Ascending aorta (tissue), 2 donors: ENCODE measurements at regions of chr3 and their contacts with region 1.

Region 1: GRCh38 chr3:174440741-174441587 is 418.2 kb upstream of the NAALADL2 start:
- DNase-seq: peak; percentile 15 to 91
- H3K4me3 ChIP-seq: peak overlapping the region; percentile 81 to 93
- H3K27ac ChIP-seq: peak overlapping the region; percentile 90 to 99
- H3K4me1 ChIP-seq: peaks cover 0 to 5% of the 10 kb centered on the region in 2 donors
- H3K27me3 ChIP-seq: no peaks in the 10 kb centered on the region
- CTCF ChIP-seq: no peak

Region 2: GRCh38 chr3:173395412-173396181 is 1045.4 kb before region 1 on chr3:
- intact Hi-C with region 1: loop called (anchors 2 kb)
- DNase-seq: peak; percentile 53 to 95
- H3K4me3 ChIP-seq: peak overlapping the region; percentile 55 to 87
- H3K27ac ChIP-seq: peak overlapping the region; percentile 85 to 91
- H3K4me1 ChIP-seq: peaks cover 0 to 2% of the 10 kb centered on the region in 2 donors
- H3K27me3 ChIP-seq: no peaks in the 10 kb centered on the region
- CTCF ChIP-seq: peak in 1 of 3 experiments; percentile 13

Region 3: DNA sequence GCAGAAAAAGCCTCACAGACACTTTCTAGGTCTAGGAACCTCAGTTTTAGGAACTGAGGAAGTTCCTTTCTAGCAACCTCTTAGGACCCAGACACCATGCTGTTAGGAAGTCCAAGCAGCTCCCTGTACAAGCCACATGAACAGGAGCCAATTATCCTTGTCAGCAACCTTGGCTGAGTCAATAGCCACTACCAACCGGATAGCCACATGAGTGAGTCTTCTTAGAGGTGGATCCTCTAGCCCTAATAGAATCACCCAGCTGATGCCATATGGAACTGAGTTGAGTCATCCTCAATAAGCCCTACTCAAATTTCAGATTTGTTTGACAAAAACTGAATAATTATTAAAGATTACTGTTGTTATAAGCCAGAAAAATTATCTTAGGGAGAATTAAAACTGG is 787.2 kb before region 1 on chr3:
- intact Hi-C with region 1: no loop called
- DNase-seq: no peak
- H3K4me3 ChIP-seq: no peak overlapping the region
- H3K27ac ChIP-seq: no peak overlapping the region
- H3K4me1 ChIP-seq: no peaks in the 10 kb centered on the region
- H3K27me3 ChIP-seq: no peaks in the 10 kb centered on the region
- CTCF ChIP-seq: no peak

Region 4: GRCh38 chr3:174495311-174495710 is 54.3 kb after region 1 on chr3:
- intact Hi-C with region 1: loop called (anchors 5 kb)
- DNase-seq: no peak
- H3K4me3 ChIP-seq: no peak overlapping the region
- H3K27ac ChIP-seq: peak overlapping the region; percentile 17 to 20
- H3K4me1 ChIP-seq: peaks cover 0 to 8% of the 10 kb centered on the region in 2 donors
- H3K27me3 ChIP-seq: no peaks in the 10 kb centered on the region
- CTCF ChIP-seq: no peak

Region 5: DNA sequence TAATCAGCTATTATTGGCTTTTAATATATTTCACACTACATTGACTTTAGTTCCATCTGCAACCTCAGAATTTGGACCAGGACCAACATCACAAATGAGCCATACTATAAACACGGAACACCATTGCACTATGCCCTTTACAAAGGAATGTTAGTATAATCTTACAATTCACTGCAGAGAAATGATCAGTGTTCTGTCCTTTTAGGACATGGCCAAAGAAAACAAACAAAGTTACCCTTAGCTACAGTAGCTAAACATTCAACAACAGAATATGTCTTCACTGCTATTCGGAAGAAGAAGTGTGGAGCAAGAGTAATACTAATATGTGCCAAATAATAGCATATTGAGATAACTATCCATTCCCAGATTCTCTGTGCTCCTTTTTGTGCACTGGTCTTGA is 508.6 kb after region 1 on chr3:
- intact Hi-C with region 1: loop called (anchors 2 kb)
- DNase-seq: no peak
- H3K4me3 ChIP-seq: no peak overlapping the region
- H3K27ac ChIP-seq: peak overlapping the region; percentile 24 to 43
- H3K4me1 ChIP-seq: peaks cover 5 to 7% of the 10 kb centered on the region in 2 donors
- H3K27me3 ChIP-seq: no peaks in the 10 kb centered on the region
- CTCF ChIP-seq: no peak

Region 6: GRCh38 chr3:175193815-175194518 is 753.0 kb after region 1 on chr3:
- intact Hi-C with region 1: loop called (anchors 5 kb)
- DNase-seq: no peak
- H3K4me3 ChIP-seq: no peak overlapping the region
- H3K27ac ChIP-seq: no peak overlapping the region
- H3K4me1 ChIP-seq: peaks cover 0 to 4% of the 10 kb centered on the region in 2 donors
- H3K27me3 ChIP-seq: no peaks in the 10 kb centered on the region
- CTCF ChIP-seq: no peak